Ovary (tissue), 10 donors: ENCODE measurements at regions of chr16 and their contacts with region 1.

Region 1: GRCh38 chr16:19907161-19907992 is 22.7 kb upstream of the GPRC5B start:
- DNase-seq: peak; percentile 22 to 61 (median 44)
- H3K4me3 ChIP-seq: no peak overlapping the region
- H3K27ac ChIP-seq: no peak overlapping the region
- H3K4me1 ChIP-seq: no peaks in the 10 kb centered on the region
- H3K27me3 ChIP-seq: no peaks in the 10 kb centered on the region
- CTCF ChIP-seq: peak in 2 of 3 donors; percentile 44 to 49
- EP300 ChIP-seq: no peak
- POLR2A ChIP-seq: no peak

Region 2: DNA sequence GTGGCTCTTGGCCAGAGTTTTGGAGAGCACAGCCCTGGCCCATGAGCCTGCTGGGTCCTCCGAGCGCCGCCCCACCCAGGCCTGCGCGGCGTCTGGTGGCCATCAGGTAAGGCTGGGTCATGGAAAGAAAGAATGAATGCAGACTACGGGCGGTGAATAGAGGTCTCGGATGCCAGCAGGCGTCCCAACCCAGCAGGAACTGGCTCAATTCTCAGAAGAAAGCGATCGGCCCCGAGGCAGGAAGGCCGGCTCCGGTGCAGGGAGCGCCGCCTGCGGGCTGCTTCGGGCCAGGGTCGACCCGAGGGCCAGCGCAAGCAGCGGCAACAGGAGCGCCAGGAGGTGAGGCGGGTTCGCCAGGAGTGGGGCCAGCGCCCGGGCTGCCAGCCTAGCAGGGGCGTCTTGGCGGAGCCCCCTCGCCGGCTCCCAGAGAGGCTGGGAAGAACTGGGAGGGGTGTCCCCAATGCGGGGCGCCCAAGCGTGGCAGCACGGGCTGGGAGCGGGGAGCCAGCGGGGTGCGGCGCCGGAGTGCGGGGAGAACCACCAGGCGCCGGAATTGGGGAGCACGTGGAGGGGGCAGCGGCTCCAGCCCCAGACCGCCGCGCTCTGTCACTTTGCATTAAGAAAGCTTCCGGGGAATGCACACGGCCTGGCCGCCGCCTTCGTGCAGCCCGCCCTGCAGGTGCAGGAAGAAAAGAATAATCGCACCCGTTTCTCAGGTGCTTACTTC is 496.8 kb before region 1 on chr16:
- intact Hi-C with region 1: no loop called
- DNase-seq: no peak
- H3K4me3 ChIP-seq: peak overlapping the region; percentile 27
- H3K27ac ChIP-seq: no peak overlapping the region
- H3K4me1 ChIP-seq: no peaks in the 10 kb centered on the region
- H3K27me3 ChIP-seq: no peaks in the 10 kb centered on the region
- CTCF ChIP-seq: no peak
- EP300 ChIP-seq: no peak
- POLR2A ChIP-seq: no peak

Region 3: DNA sequence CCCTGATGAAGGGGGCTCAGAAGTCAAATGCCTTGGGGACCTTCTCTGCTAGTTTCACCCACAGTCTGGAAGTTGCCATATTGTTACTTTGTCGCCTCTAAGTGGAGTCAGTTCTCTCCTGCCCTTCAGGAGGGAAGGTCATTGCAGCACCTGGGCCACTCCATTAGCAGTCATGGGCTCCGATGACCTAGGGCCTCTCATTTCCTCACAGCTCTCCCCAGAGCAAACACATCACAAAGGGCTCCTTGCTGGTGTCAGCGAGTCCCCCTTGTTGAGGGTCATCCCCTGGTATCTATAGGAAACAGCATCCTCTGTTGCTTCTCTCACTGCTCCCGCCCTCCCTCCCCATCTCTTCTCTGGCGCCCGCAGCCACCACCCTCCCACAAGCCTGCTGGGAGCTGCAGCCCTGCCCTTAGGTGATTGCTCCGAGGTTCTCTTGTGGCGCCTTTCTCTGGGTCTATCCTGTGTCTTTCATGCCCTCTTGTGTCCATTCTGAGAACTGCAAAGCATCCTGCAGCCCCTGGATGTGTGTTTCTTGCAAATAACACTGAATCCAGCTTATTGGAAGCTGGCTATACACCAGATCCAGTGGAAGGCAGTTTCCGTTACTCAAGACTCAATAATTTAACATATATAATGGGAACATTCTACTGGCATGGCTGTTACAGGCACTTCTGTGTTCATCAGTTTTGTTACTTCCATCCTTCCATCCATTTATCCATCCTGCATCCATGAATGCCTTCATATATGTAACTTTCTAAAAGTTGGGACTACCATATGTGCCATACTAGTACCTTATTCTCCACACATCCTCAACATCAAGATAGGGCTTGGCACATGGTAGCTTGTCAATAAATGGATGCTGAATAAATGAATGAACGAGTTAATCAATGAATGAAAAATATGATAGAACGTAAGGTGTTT is 476.0 kb after region 1 on chr16:
- intact Hi-C with region 1: loop called in 2 of 4 experiments (anchors 5 to 10 kb)
- DNase-seq: peak; percentile 34 to 61 (median 42)
- H3K4me3 ChIP-seq: no peak overlapping the region
- H3K27ac ChIP-seq: no peak overlapping the region
- H3K4me1 ChIP-seq: peaks cover 3% of the 10 kb centered on the region
- H3K27me3 ChIP-seq: no peaks in the 10 kb centered on the region
- CTCF ChIP-seq: peak; percentile 19 to 56 (median 43)
- EP300 ChIP-seq: no peak
- POLR2A ChIP-seq: no peak